Activated CD4-positive, alpha-beta T cell treated with anti-CD3 and anti-CD28 coated beads for 36 hours (primary cell): ENCODE measurements at regions of chr11 and their contacts with region 1.

Region 1: GRCh38 chr11:73982969-73983740 is 512 bp upstream of the UCP2 start:
- DNase-seq: peak; percentile 96
- ATAC-seq: peak; percentile 84
- H3K4me3 Mint-ChIP-seq: peak overlapping the region; percentile 89
- H3K27ac Mint-ChIP-seq: peak overlapping the region; percentile 96
- H3K4me1 Mint-ChIP-seq: peaks cover 60% of the 10 kb centered on the region
- H3K27me3 Mint-ChIP-seq: no peaks in the 10 kb centered on the region

Region 2: GRCh38 chr11:73366265-73366610 is 616.9 kb before region 1 on chr11:
- CTCF ChIA-PET with region 1: no interaction called
- POLR2A ChIA-PET with region 1: no interaction called
- intact Hi-C with region 1: no loop called
- DNase-seq: peak; percentile 42
- ATAC-seq: peak; percentile 77
- H3K4me3 Mint-ChIP-seq: no peak overlapping the region
- H3K27ac Mint-ChIP-seq: peak overlapping the region; percentile 77
- H3K4me1 Mint-ChIP-seq: peaks cover 25% of the 10 kb centered on the region
- H3K27me3 Mint-ChIP-seq: no peaks in the 10 kb centered on the region

Region 3: GRCh38 chr11:73376160-73376802 is 606.9 kb before region 1 on chr11 and contains the start of gene RELT:
- CTCF ChIA-PET with region 1: no interaction called
- POLR2A ChIA-PET with region 1: no interaction called
- intact Hi-C with region 1: loop called in 1 of 2 experiments (anchors 2 kb)
- DNase-seq: peak; percentile 96
- ATAC-seq: peak; percentile 94
- H3K4me3 Mint-ChIP-seq: peak within 1 kb of the TSS; percentile 92
- H3K27ac Mint-ChIP-seq: peak within 1 kb of the TSS; percentile 93
- H3K4me1 Mint-ChIP-seq: peaks cover 33% of the 10 kb centered on the region
- H3K27me3 Mint-ChIP-seq: no peaks in the 10 kb centered on the region
- total RNA-seq, gene RELT: 18.5 to 21.3 TPM

Region 4: DNA sequence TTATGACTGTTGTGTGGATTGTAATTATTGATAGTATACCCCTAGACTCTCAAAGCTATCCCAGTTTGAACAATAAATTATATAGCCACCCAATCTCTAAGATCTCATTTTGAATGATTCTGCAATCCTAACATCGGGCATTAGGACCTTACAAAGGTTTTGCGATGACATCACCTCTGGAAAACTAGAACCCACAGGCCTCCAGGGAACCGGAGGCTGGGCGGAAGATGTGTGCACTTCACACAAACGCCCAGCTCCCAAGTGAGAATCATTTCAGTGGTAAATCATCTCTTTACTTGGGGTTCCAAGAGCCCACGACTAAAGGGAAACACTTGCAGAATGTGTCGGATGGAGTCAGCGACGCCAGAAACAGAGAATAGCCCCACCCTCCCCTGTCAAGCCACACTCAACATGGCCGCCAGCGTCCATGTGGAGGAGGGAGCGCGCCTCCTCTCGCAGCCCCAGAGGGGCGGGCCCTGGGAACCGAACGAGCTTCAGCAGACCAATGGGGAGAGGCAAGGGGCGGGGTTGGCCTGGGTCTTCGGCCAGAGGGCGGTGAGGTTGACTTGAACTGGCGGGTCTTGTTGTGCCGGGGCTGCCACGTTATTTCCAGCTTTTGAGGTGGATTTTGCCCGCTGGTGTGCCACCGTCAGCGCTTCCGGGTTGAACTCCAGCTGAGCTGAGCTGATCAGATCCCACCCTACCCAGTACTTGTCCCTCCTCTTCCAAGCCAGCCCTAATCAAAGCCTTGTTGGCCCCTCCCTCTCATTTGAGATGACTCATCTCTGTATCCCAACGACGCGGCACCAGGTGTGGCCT is 203.9 kb before region 1 on chr11:
- CTCF ChIA-PET with region 1: no interaction called
- POLR2A ChIA-PET with region 1: no interaction called
- intact Hi-C with region 1: loop called in 1 of 2 experiments (anchors 2 kb)
- DNase-seq: peak; percentile 100
- ATAC-seq: peak; percentile 97
- H3K4me3 Mint-ChIP-seq: peak overlapping the region; percentile 80
- H3K27ac Mint-ChIP-seq: peak overlapping the region; percentile 98
- H3K4me1 Mint-ChIP-seq: peaks cover 10% of the 10 kb centered on the region
- H3K27me3 Mint-ChIP-seq: no peaks in the 10 kb centered on the region

Region 5: DNA sequence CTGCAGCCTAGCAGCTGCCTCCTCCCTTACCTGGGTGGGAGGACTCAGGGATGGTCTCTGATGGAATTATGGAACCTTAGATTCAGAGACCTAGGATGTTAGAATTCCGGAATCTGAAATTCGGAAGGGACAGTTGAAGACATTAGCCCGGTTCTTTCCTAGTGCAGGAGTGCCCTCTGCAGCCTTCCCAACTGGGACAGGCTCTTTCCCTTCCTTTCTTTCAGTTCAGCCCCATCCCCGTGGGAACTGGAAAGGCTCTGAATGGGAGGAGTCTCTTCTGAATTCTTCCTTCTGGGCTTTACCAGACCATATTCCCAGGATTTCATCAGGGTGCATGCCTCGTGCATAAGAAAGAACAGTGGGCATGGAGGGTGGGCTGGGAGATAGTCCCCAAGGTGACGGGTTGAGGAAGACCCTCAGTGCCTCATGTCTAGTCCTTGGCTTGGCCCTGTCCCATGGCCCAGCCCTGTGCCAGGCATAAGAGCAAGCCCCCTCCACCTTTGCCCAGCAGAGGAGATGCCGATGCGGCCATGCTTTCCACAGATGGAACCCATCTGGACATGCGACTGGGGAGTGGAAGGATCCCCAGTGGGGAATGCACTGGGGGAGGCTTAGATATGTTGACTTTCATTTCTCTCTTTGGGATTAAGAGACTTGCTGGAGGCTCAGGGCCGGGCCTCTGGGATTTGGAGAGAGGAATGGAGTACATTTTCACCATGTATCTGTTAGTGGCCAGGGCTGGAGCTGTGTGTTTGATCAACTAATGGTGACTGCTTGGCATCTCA is 17.9 kb before region 1 on chr11:
- CTCF ChIA-PET with region 1: interaction called, 10 read pairs
- POLR2A ChIA-PET with region 1: interaction called, 7 read pairs
- intact Hi-C with region 1: no loop called
- DNase-seq: no peak
- ATAC-seq: no peak
- H3K4me3 Mint-ChIP-seq: no peak overlapping the region
- H3K27ac Mint-ChIP-seq: no peak overlapping the region
- H3K4me1 Mint-ChIP-seq: peaks cover 44% of the 10 kb centered on the region
- H3K27me3 Mint-ChIP-seq: no peaks in the 10 kb centered on the region

Region 6: GRCh38 chr11:74011360-74012073 is 28.4 kb after region 1 on chr11:
- CTCF ChIA-PET with region 1: interaction called, 5 read pairs
- POLR2A ChIA-PET with region 1: interaction called, 35 read pairs
- intact Hi-C with region 1: loop called in 1 of 2 experiments (anchors 1 kb)
- DNase-seq: peak; percentile 73
- ATAC-seq: peak; percentile 78
- H3K4me3 Mint-ChIP-seq: no peak overlapping the region
- H3K27ac Mint-ChIP-seq: peak overlapping the region; percentile 83
- H3K4me1 Mint-ChIP-seq: peaks cover 83% of the 10 kb centered on the region
- H3K27me3 Mint-ChIP-seq: no peaks in the 10 kb centered on the region

Region 7: GRCh38 chr11:74170694-74171629 is 187.8 kb after region 1 on chr11 and contains the starts of genes C2CD3 and PPME1:
- CTCF ChIA-PET with region 1: interaction called, 3 read pairs
- POLR2A ChIA-PET with region 1: interaction called, 3 read pairs
- intact Hi-C with region 1: loop called (anchors 1 to 5 kb)
- DNase-seq: peak; percentile 98
- ATAC-seq: peak; percentile 96
- H3K4me3 Mint-ChIP-seq: no peak within 1 kb of the TSS
- H3K27ac Mint-ChIP-seq: no peak within 1 kb of the TSS
- H3K4me1 Mint-ChIP-seq: peaks cover 16% of the 10 kb centered on the region
- H3K27me3 Mint-ChIP-seq: no peaks in the 10 kb centered on the region
- total RNA-seq, gene C2CD3: 23.9 to 28.0 TPM
- total RNA-seq, gene PPME1: 54.2 to 61.5 TPM

Region 8: DNA sequence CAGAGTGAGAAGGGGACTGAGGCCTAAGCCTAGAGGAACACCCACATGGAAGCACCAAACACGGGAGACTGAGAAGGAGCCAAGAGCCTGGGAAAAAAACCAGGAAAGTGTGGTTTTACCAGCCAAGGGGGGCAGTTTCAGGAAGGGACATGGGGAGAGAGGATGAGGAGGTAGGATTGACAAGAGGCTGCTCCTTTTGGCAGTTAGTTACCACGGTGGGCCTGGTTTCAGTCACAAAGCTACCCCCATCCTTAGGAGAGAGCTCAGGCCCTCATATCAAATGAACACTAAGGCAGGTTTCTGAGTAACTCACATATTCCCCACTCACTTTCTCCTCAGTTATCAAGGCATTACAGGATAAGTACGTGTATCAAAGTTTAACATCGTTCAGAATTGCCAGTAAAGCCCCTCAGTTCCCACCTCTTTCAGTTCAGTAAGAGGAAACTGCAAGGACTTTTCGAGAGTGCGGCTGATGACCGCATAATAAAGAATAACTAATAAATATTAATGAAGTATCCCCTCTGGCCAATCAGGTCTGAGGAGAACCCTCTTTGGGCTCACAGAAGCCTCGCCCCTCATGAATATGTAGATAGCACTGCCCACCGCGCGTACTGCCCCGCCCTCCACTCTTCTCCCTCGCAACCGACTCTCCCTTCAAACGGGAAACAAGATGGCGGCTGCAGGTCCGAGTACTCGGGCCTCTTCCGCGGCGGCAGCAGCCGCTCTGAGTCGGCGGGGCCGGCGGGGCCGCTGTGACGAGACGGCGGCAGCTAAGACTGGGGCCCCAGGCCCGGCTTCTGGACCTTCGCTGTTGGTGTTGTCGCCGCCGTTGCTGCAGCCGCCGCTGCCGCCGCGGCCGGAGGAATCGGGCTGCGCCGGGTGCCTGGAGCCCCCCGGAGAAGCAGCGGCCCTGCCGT is 765.3 kb after region 1 on chr11 and contains the start of gene RNF169:
- CTCF ChIA-PET with region 1: no interaction called
- POLR2A ChIA-PET with region 1: no interaction called
- intact Hi-C with region 1: loop called in 1 of 2 experiments (anchors 10 kb)
- DNase-seq: peak; percentile 93
- ATAC-seq: peak; percentile 97
- H3K4me3 Mint-ChIP-seq: peak within 1 kb of the TSS; percentile 80
- H3K27ac Mint-ChIP-seq: peak within 1 kb of the TSS; percentile 73
- H3K4me1 Mint-ChIP-seq: peaks cover 29% of the 10 kb centered on the region
- H3K27me3 Mint-ChIP-seq: no peaks in the 10 kb centered on the region
- total RNA-seq, gene RNF169: 15.3 to 16.0 TPM